Activated T-helper 1 cell treated with anti-CD3 and anti-CD28 coated beads, Interleukin-12 subunit alpha, Interleukin-12 subunit beta, Interleukin-2, Interleukin-4 antibody, amounts not matched to agents 30 ng/mL and 10 ng/mL and 1 ng/mL, durations not matched to agents 14 hours and 24 hours and 36 hours (primary cell): ENCODE measurements at regions of chr15 and their contacts with region 1.

Region 1: GRCh38 chr15:82966671-82967071 is 14.2 kb upstream of the HOMER2 start:
- DNase-seq: peak; percentile 19
- H3K4me3 Mint-ChIP-seq: peak overlapping the region; percentile 13
- H3K27ac Mint-ChIP-seq: no peak overlapping the region
- H3K4me1 Mint-ChIP-seq: peaks cover 12% of the 10 kb centered on the region
- H3K27me3 Mint-ChIP-seq: peaks cover 37% of the 10 kb centered on the region

Region 2: GRCh38 chr15:82832601-82833361 is 133.9 kb before region 1 on chr15:
- intact Hi-C with region 1: loop called (anchors 5 kb)
- DNase-seq: peak; percentile 17
- H3K4me3 Mint-ChIP-seq: peak overlapping the region; percentile 57
- H3K27ac Mint-ChIP-seq: peak overlapping the region; percentile 87
- H3K4me1 Mint-ChIP-seq: peaks cover 54% of the 10 kb centered on the region
- H3K27me3 Mint-ChIP-seq: peaks cover 2% of the 10 kb centered on the region

Region 3: DNA sequence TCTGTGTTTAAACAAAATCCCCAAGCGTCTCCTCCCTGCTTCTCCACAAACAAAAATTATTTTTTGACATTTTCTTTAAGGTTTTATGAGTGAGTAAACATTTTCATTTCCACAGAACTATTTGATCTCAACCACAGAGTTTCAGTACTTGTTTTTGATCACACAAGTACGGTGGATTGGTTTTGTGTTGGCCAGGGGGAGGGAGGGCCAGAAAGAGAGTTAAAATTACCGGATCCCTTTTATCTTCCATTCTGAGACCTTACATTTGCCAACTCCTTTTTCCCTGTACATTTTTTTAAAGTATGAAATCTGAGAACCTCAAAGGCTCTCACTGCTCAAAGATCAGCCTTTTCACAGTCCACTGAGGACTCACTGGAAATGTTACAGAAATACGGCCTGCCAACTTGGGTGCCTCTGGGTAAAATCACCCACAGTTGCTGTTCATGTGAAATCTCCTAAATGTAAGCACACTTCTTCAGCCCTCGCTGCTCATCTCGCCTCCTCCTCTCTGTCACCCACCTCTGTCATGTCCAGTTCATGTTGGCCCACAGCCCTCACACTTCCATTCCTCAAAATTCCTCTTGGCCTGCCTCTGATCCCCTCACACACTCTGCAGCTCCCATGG is 15.8 kb before region 1 on chr15:
- intact Hi-C with region 1: loop called (anchors 1 kb)
- DNase-seq: no peak
- H3K4me3 Mint-ChIP-seq: no peak overlapping the region
- H3K27ac Mint-ChIP-seq: no peak overlapping the region
- H3K4me1 Mint-ChIP-seq: no peaks in the 10 kb centered on the region
- H3K27me3 Mint-ChIP-seq: peaks cover 22% of the 10 kb centered on the region